Left colon (tissue), 2 donors: ENCODE measurements at regions of chr19 and their contacts with region 1.

Region 1: GRCh38 chr19:46487802-46488445 is 7.7 kb downstream of the PNMA8B start:
- DNase-seq: peak in 1 of 2 donors; percentile 75
- ATAC-seq: peak; percentile 83

Region 2: DNA sequence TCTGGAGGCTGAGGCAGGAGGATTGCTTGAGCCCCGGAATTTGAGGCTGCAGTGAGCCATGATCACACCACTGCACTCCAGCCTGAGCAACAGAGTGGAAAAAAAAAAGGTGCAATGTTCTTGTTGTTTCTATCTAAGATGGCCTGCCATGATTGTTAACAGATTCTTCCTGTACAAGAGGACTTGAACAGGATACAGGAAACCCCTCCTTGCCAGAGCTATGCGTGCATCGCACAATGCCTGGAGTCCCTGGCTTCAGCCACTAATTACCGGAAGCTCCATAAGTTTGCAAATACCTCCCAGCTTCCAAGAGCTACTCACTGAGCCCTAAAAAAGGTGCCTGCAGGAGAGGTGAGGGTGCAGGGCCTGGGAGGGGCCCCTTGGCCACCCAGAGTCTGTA is 204.2 kb before region 1 on chr19:
- intact Hi-C with region 1: loop called in 1 of 2 experiments (anchors 5 kb)
- DNase-seq: no peak
- ATAC-seq: no peak

Region 3: GRCh38 chr19:46339446-46339845 is 148.5 kb before region 1 on chr19:
- intact Hi-C with region 1: no loop called
- DNase-seq: no peak
- ATAC-seq: no peak

Region 4: DNA sequence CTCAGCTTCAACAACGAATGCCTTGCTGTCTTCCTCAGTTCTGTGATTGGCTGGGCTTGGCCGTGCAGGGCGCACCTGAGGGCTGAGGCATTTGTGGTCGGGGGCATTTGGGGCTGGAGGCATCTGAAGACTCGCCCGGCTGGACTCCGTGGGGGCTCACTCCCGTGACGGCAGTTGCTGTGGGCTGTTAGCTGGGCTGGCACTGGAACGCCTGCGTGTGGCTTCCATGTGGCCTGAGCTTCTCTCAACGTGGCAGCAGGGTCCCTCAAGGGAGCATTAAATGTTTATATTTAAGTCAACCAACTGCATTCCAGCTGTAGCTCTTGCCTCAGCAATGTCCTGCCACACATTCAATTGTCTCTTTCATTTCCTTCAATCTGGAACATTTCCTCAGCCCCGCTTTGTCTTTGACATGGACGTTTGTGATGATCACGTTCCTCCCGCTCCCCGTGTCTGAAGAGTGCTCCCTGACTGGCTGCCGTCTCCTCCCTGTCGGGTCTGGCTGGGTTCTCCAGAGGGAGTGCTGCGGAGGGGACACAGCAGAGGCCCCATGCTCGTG is 95.6 kb before region 1 on chr19:
- intact Hi-C with region 1: loop called in 1 of 2 experiments (anchors 2 kb)
- DNase-seq: no peak
- ATAC-seq: no peak

Region 5: GRCh38 chr19:46404055-46404752 is 83.7 kb before region 1 on chr19:
- intact Hi-C with region 1: loop called in 1 of 2 experiments (anchors 5 kb)
- DNase-seq: peak; percentile 62 to 74
- ATAC-seq: peak; percentile 91

Region 6: GRCh38 chr19:46442808-46443450 is 45.0 kb before region 1 on chr19:
- intact Hi-C with region 1: no loop called
- DNase-seq: no peak
- ATAC-seq: no peak

Region 7: DNA sequence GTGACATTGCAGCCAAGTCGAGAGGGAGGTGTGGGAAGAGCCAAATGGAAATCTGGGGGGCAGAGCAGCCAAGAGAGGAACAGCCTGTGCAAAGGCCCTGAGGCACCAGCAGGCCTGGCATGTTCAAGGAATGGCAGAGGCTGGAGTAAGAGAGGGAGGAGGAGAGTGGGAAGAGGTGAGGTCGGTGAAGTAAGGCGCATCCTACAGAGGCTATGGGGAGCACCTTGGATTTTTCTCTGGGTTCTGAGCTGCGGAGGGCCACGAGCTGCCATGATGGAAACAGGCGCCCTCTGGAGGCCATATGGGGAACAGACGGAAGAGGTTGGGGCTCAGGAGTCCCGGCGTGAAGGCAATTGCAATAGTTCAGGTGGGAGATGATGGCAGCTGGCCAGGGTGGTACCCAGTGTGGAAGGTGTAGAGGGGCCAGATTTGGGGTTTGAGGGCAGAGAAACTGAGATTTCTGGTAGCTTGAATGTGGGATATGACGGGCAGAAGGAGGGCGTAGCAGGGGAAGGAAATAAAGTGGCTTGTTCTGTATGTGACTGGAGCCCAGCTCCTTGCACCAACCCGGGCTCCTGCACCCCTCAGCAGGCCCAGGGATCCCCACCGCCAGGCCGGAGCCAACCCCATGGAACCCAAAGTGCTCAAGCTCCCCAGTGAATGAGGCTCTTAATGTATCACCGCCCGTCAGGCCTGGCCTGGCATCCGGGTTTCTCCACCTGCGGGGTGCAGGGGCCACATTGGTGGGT is 278.8 kb after region 1 on chr19:
- intact Hi-C with region 1: no loop called
- DNase-seq: peak in 1 of 2 donors; percentile 60
- ATAC-seq: no peak